ENCODE measurements at regions of chr10 and their contacts with region 1.

Region 1: DNA sequence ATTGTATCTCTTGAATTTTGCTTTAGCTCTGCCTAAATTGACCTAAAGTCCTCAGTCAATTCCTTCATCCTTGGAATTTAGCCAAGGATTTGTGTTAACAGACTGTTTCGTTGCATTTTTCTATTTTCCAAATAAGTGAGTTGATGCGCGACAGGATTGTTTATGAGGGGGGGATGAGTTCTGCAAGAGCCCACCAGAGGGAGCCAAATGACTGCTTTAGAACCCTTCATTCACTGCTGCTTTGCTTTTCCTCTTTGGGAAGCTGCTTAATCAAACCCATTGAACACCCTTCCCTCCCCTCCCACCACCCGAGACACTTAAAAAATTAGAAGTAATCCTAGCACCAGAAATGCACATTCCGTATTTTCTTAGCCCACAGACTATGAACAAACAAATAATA is 33.7 kb upstream of the PTF1A start:
- DNase-seq: peak; percentile 61
- H3K4me3 Mint-ChIP-seq: no peak overlapping the region
- H3K27ac Mint-ChIP-seq: no peak overlapping the region
- H3K4me1 Mint-ChIP-seq: peaks cover 8% of the 10 kb centered on the region
- H3K27me3 Mint-ChIP-seq: peaks cover 33% of the 10 kb centered on the region

Region 2: GRCh38 chr10:23047201-23048050 is 110.9 kb before region 1 on chr10:
- CTCF ChIA-PET with region 1: no interaction called
- intact Hi-C with region 1: no loop called
- DNase-seq: no peak
- H3K4me3 Mint-ChIP-seq: no peak overlapping the region
- H3K27ac Mint-ChIP-seq: no peak overlapping the region
- H3K4me1 Mint-ChIP-seq: no peaks in the 10 kb centered on the region
- H3K27me3 Mint-ChIP-seq: no peaks in the 10 kb centered on the region

Region 3: GRCh38 chr10:23293145-23293724 is 134.9 kb after region 1 on chr10:
- CTCF ChIA-PET with region 1: interaction called, 71 read pairs
- intact Hi-C with region 1: loop called (anchors 1 kb)
- DNase-seq: peak; percentile 71
- H3K4me3 Mint-ChIP-seq: no peak overlapping the region
- H3K27ac Mint-ChIP-seq: no peak overlapping the region
- H3K4me1 Mint-ChIP-seq: peaks cover 2% of the 10 kb centered on the region
- H3K27me3 Mint-ChIP-seq: peaks cover 14% of the 10 kb centered on the region

Region 4: DNA sequence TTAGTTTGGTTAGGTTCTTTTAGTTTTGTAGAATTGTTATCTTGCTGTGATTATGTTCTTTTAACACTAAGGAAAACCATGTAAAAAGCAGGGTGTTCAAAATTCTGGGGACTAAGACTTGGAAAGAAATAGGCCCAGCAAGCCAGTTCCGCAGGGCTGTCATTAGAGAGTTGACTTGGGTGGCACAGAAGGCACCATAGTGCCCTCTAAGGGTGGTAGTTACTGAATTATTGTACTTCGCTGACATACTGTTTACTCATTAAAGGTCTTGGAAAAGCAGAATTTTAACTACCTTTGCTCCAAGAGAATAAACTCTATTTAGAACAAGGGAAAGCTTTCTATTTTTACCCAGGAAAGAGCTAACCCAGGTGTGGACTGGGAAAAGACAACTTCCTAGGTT is 367.0 kb after region 1 on chr10:
- CTCF ChIA-PET with region 1: interaction called, 6 read pairs
- intact Hi-C with region 1: loop called (anchors 1 kb)
- DNase-seq: peak; percentile 29
- H3K4me3 Mint-ChIP-seq: no peak overlapping the region
- H3K27ac Mint-ChIP-seq: no peak overlapping the region
- H3K4me1 Mint-ChIP-seq: peaks cover 13% of the 10 kb centered on the region
- H3K27me3 Mint-ChIP-seq: no peaks in the 10 kb centered on the region

Region 5: GRCh38 chr10:24201503-24202180 is 1043.3 kb after region 1 on chr10:
- CTCF ChIA-PET with region 1: no interaction called
- intact Hi-C with region 1: loop called (anchors 1 kb)
- DNase-seq: no peak
- H3K4me3 Mint-ChIP-seq: no peak overlapping the region
- H3K27ac Mint-ChIP-seq: no peak overlapping the region
- H3K4me1 Mint-ChIP-seq: peaks cover 6% of the 10 kb centered on the region
- H3K27me3 Mint-ChIP-seq: peaks cover 32% of the 10 kb centered on the region

Region 6: DNA sequence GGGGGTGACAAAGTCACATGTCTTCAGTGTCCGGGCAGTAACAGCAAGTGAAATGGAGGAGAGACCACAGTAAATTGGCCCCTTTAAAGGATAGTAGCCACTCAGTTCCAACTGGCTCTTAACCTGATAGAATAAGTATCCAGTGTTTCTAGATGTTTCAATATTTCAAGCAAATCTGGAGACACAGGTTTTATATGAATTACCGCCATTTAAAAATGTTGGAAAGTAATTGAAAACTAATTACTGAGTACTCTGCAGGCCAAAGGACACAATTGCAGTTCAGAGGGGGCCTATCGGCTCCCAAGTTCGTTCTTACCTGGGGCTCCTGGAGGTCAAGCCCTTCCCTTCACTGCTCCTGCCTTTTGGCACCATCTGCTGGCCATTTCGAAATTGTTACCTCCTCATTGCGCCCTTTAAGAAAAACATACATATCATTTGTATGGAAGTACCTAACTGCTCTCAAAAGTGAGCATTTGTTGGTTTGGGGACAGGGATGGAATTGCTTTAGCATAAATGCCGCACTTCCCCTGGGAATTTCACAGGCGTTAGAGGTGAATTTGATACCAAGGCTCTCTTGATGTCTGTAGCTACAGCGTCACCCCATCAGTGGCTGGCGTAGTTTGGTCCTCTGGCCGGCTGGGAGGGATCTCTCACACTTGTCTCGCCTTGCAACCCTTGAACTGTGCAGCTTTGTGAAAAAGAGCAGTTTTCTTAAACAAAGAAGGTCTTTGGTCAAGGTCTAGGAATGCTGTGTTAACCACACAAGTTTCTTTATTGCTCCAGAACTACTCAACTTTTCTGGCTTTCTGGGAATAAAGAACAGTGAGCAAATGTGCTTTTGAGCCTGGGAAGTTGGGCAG is 1345.3 kb after region 1 on chr10:
- CTCF ChIA-PET with region 1: no interaction called
- intact Hi-C with region 1: loop called (anchors 5 kb)
- DNase-seq: peak; percentile 58
- H3K4me3 Mint-ChIP-seq: no peak overlapping the region
- H3K27ac Mint-ChIP-seq: no peak overlapping the region
- H3K4me1 Mint-ChIP-seq: no peaks in the 10 kb centered on the region
- H3K27me3 Mint-ChIP-seq: peaks cover 14% of the 10 kb centered on the region

Region 7: GRCh38 chr10:24556750-24557742 is 1398.7 kb after region 1 on chr10:
- CTCF ChIA-PET with region 1: no interaction called
- intact Hi-C with region 1: loop called (anchors 1 kb)
- DNase-seq: peak; percentile 41
- H3K4me3 Mint-ChIP-seq: no peak overlapping the region
- H3K27ac Mint-ChIP-seq: no peak overlapping the region
- H3K4me1 Mint-ChIP-seq: peaks cover 6% of the 10 kb centered on the region
- H3K27me3 Mint-ChIP-seq: no peaks in the 10 kb centered on the region